ENCODE measurements at regions of chr16 and their contacts with region 1.

Region 1: DNA sequence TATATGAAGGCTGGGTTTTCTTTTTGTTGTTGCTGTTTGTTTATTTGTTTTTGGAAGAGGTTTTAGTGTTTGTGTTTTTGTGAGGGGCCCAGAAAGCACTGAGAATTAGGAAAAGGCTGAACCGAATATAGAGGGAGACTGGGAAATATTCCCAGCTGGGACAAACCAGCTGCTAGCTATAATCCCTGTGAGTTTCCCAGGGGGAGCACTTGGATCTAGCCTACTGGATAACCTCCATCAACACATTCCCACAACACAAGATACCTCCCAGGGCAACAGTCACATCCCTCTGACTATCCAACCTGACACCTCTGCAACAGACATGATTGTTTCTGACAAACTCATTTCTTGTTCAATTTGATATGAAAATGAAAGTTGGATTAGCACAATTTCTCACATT is 16.7 kb downstream of the CDH11 start:
- DNase-seq: no peak
- H3K4me3 ChIP-seq: no peak overlapping the region
- H3K4me3 Mint-ChIP-seq: no peak overlapping the region
- H3K27ac Mint-ChIP-seq: no peak overlapping the region
- H3K4me1 ChIP-seq: no peaks in the 10 kb centered on the region
- H3K4me1 Mint-ChIP-seq: no peaks in the 10 kb centered on the region
- H3K27me3 ChIP-seq: no peaks in the 10 kb centered on the region; the same call in 1 of the 2 replicates
- H3K27me3 Mint-ChIP-seq: peaks cover 7% of the 10 kb centered on the region
- CTCF ChIP-seq: no peak

Region 2: GRCh38 chr16:65068151-65068740 is 36.9 kb before region 1 on chr16:
- CTCF ChIA-PET with region 1: no interaction called
- POLR2A ChIA-PET with region 1: interaction called, 10 read pairs
- intact Hi-C with region 1: no loop called
- DNase-seq: no peak
- H3K4me3 ChIP-seq: no peak overlapping the region
- H3K4me3 Mint-ChIP-seq: no peak overlapping the region
- H3K27ac Mint-ChIP-seq: no peak overlapping the region
- H3K4me1 ChIP-seq: peaks cover 11% of the 10 kb centered on the region
- H3K4me1 Mint-ChIP-seq: no peaks in the 10 kb centered on the region
- H3K27me3 ChIP-seq: no peaks in the 10 kb centered on the region
- H3K27me3 Mint-ChIP-seq: peaks cover 19% of the 10 kb centered on the region
- CTCF ChIP-seq: no peak

Region 3: GRCh38 chr16:65480038-65480794 is 375.0 kb after region 1 on chr16:
- CTCF ChIA-PET with region 1: no interaction called
- POLR2A ChIA-PET with region 1: no interaction called
- intact Hi-C with region 1: no loop called
- DNase-seq: no peak
- H3K4me3 ChIP-seq: no peak overlapping the region
- H3K4me3 Mint-ChIP-seq: no peak overlapping the region
- H3K27ac Mint-ChIP-seq: no peak overlapping the region
- H3K4me1 ChIP-seq: no peaks in the 10 kb centered on the region
- H3K4me1 Mint-ChIP-seq: no peaks in the 10 kb centered on the region
- H3K27me3 ChIP-seq: no peaks in the 10 kb centered on the region; the same call in 1 of the 2 replicates
- H3K27me3 Mint-ChIP-seq: no peaks in the 10 kb centered on the region
- CTCF ChIP-seq: no peak